CD8-positive, alpha-beta memory T cell (primary cell): ENCODE measurements at regions of chr21 and their contacts with region 1.

Region 1: DNA sequence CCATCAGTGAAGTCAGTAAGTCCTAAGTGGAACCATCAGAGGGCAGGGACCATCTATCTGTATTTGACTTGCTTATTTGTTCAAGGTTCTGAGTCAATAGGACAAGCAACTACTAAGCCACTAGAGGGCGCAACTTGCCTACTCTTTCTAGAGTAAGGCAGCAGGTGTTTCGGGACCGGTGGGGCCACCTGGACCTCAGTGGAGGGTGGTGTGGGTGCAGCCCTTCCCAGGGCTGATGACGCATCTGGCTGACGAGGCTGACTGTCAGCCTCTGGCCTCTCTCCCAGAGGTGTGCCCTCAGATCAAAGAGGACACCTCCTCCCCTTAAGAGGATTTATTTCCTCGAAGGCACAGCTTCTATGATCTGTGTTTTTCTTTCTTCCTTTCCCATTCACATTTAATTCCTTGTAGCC is 6.6 kb downstream of the CBR3 start:
- DNase-seq: peak; percentile 79 to 89 (median 84)
- H3K4me3 ChIP-seq: no peak overlapping the region
- H3K4me3 Mint-ChIP-seq: peak overlapping the region in 2 of 7 donors; percentile 11 to 25
- H3K27ac ChIP-seq: no peak overlapping the region
- H3K27ac Mint-ChIP-seq: peak overlapping the region; percentile 40 to 85 (median 66)
- H3K4me1 ChIP-seq: peaks cover 26% of the 10 kb centered on the region
- H3K4me1 Mint-ChIP-seq: peaks cover 19 to 25% (median 22%) of the 10 kb centered on the region in 3 donors
- H3K27me3 ChIP-seq: no peaks in the 10 kb centered on the region
- H3K27me3 Mint-ChIP-seq: no peaks in the 10 kb centered on the region

Region 2: DNA sequence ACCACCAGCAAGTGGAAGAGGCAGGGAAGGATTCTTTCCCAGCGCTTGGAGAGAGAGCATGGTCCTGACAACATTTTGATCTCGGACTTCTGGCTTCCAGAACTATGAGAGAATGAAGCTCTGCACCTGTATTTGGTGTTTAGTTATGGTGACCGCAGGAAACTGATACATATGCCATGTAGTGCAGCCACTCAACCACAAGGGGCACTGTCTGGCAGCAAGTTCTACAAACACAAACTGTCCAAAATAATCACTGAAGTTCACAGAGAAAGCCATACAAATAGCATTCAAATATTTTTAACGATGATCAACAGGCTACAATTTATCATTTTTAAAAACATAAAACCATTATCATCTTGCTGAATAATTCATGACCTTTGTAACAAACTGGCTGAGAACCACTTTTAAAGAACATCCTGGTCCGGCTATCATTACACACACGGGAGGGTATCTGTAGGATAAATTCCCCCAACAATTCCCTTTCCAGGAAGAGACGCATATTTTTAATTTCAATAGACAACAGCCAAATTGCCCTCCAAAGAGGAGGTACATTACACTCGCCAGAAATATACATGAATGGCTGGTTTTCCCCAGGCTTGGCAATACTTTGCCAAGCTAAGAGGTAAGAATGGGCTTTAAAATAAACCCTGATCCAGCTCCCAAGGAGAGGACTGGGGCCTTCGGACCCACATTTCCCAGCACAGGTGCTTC is 15.9 kb before region 1 on chr21:
- CTCF ChIA-PET with region 1: interaction called, 34 read pairs
- POLR2A ChIA-PET with region 1: no interaction called
- DNase-seq: peak; percentile 21 to 70 (median 35)
- H3K4me3 ChIP-seq: no peak overlapping the region
- H3K4me3 Mint-ChIP-seq: peak overlapping the region in 1 of 7 donors; percentile 46
- H3K27ac ChIP-seq: no peak overlapping the region
- H3K27ac Mint-ChIP-seq: peak overlapping the region in 2 of 8 donors; percentile 24 to 72
- H3K4me1 ChIP-seq: peaks cover 6% of the 10 kb centered on the region
- H3K4me1 Mint-ChIP-seq: peaks cover 11 to 23% (median 16%) of the 10 kb centered on the region in 3 donors
- H3K27me3 ChIP-seq: no peaks in the 10 kb centered on the region
- H3K27me3 Mint-ChIP-seq: peaks cover 2 to 3% of the 10 kb centered on the region in 2 donors

Region 3: DNA sequence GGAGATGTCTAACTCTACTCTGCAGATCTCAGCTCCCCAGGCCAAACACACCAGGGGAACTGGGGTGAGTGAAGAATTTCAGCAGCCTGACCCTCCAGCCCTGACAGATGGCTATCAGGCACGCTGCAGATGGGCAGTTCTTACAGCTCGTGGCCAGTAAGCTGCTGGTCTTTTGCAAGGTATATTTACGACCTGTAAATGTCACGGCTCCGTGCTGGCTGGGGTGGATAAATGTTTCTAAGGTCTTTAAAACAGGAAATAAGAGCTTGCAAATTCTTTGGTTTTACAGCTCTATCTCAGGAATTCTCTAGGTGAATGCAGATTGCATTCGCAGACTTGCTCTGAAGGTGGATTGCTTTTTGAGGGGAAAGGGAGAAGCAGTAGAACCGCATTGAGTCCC is 25.2 kb after region 1 on chr21:
- CTCF ChIA-PET with region 1: no interaction called
- POLR2A ChIA-PET with region 1: no interaction called
- DNase-seq: no peak
- H3K4me3 ChIP-seq: no peak overlapping the region
- H3K4me3 Mint-ChIP-seq: no peak overlapping the region
- H3K27ac ChIP-seq: no peak overlapping the region
- H3K27ac Mint-ChIP-seq: peak overlapping the region in 2 of 8 donors; percentile 2 to 66
- H3K4me1 ChIP-seq: peaks cover 10% of the 10 kb centered on the region
- H3K4me1 Mint-ChIP-seq: peaks cover 8 to 20% (median 19%) of the 10 kb centered on the region in 3 donors
- H3K27me3 ChIP-seq: no peaks in the 10 kb centered on the region
- H3K27me3 Mint-ChIP-seq: no peaks in the 10 kb centered on the region

Region 4: GRCh38 chr21:36209626-36210171 is 68.2 kb after region 1 on chr21:
- CTCF ChIA-PET with region 1: interaction called, 22 read pairs
- POLR2A ChIA-PET with region 1: no interaction called
- DNase-seq: peak; percentile 20 to 59 (median 26)
- H3K4me3 ChIP-seq: no peak overlapping the region
- H3K4me3 Mint-ChIP-seq: no peak overlapping the region
- H3K27ac ChIP-seq: no peak overlapping the region
- H3K27ac Mint-ChIP-seq: peak overlapping the region in 3 of 8 donors; percentile 31 to 71 (median 52)
- H3K4me1 ChIP-seq: no peaks in the 10 kb centered on the region
- H3K4me1 Mint-ChIP-seq: peaks cover 0 to 6% (median 4%) of the 10 kb centered on the region in 3 donors
- H3K27me3 ChIP-seq: no peaks in the 10 kb centered on the region
- H3K27me3 Mint-ChIP-seq: no peaks in the 10 kb centered on the region

Region 5: GRCh38 chr21:36330904-36331303 is 189.4 kb after region 1 on chr21:
- CTCF ChIA-PET with region 1: interaction called, 26 read pairs
- POLR2A ChIA-PET with region 1: no interaction called
- DNase-seq: peak; percentile 19 to 63 (median 41)
- H3K4me3 ChIP-seq: no peak overlapping the region
- H3K4me3 Mint-ChIP-seq: peak overlapping the region in 1 of 7 donors; percentile 1
- H3K27ac ChIP-seq: no peak overlapping the region
- H3K27ac Mint-ChIP-seq: peak overlapping the region in 7 of 8 donors; percentile 66 to 85 (median 73)
- H3K4me1 ChIP-seq: peaks cover 42% of the 10 kb centered on the region
- H3K4me1 Mint-ChIP-seq: peaks cover 45 to 76% (median 50%) of the 10 kb centered on the region in 3 donors
- H3K27me3 ChIP-seq: no peaks in the 10 kb centered on the region
- H3K27me3 Mint-ChIP-seq: no peaks in the 10 kb centered on the region